GM12878 (cell line): ENCODE measurements at regions of chr6 and their contacts with region 1.

Region 1: DNA sequence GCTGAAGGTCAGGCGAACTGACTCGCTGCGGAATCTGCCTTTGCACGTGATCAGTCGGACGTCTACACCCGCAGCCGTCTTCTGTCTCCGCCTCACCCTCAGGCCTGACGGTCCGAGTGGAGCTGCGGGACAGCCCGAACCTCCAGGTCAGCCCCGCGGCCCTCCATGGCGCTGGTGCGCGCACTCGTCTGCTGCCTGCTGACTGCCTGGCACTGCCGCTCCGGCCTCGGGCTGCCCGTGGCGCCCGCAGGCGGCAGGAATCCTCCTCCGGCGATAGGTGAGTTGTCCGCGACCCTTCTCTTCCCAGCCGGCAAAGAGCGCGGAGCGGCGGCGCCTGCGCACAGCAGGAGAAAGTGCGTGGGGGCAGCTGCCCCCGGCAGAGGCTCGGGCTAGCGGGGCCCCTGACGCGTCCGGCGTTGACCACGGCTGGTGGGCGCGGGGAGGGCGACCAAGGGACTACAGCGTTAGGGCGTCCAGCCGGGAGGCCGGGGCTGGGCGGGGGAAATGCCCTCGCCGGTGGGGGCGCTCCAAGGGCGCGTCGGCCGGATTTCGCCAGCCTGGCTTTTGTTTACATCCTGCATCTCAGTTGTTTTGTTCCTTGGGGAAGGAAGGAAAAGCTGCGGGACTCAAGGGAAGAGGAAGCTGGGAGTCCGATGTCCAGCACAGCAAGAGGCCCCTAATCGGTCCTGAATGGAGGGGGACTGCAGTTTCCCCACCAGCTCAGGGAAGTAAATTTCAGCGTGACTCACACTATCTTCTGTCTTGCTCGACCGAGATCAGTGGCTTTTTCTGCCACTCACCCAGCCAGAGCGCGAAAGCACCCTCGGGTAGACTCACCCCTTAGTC is at the start of gene SMPDL3A:
- DNase-seq: no peak
- ATAC-seq: peak; percentile 82
- H3K4me3 ChIP-seq: peak within 1 kb of the TSS; percentile 15; the same call in 1 of the 2 replicates
- H3K27ac ChIP-seq: no peak within 1 kb of the TSS
- H3K4me1 ChIP-seq: no peaks in the 10 kb centered on the region
- H3K27me3 ChIP-seq: peaks cover 7 to 16% of the 10 kb centered on the region in 2 experiments
- CTCF ChIP-seq: peak; percentile 3 to 38 (median 19); a peak in 2 of 6 replicates
- EP300 ChIP-seq: no peak
- POLR2A ChIP-seq: no peak
- RAD21 ChIP-seq: no peak
- polyA plus RNA-seq, gene SMPDL3A: 0.05 to 0.07 TPM

Region 2: GRCh38 chr6:122751326-122751725 is 38.1 kb before region 1 on chr6:
- CTCF ChIA-PET with region 1: interaction called, 52 read pairs
- POLR2A ChIA-PET with region 1: interaction called, 14 read pairs
- RAD21 ChIA-PET with region 1: interaction called, 57 read pairs
- SMC1A ChIA-PET with region 1: interaction called, 98 read pairs
- in situ Hi-C with region 1: no loop called
- intact Hi-C with region 1: no loop called
- DNase-seq: no peak
- ATAC-seq: peak; percentile 75
- H3K4me3 ChIP-seq: no peak overlapping the region
- H3K27ac ChIP-seq: no peak overlapping the region
- H3K4me1 ChIP-seq: 0 out of 2 replicates have a peak, but pooled peaks cover 3% of the 10 kb centered on the region
- H3K27me3 ChIP-seq: no peaks in the 10 kb centered on the region
- CTCF ChIP-seq: no peak
- EP300 ChIP-seq: no peak
- POLR2A ChIP-seq: no peak
- RAD21 ChIP-seq: no peak